ENCODE measurements at regions of chr17 and their contacts with region 1.

Region 1: GRCh38 chr17:50507871-50508572 is at the start of gene MYCBPAP:
- DNase-seq: peak; percentile 16
- H3K4me3 ChIP-seq: peak within 1 kb of the TSS; percentile 49
- H3K27ac ChIP-seq: peak within 1 kb of the TSS; percentile 11
- H3K27me3 ChIP-seq: peaks cover 6% of the 10 kb centered on the region
- CTCF ChIP-seq: 0 out of 2 replicates have a peak, but pooled peaks have one; percentile 6
- polyA plus RNA-seq, gene MYCBPAP: 0.11 and 0.17 TPM in 2 replicates

Region 2: GRCh38 chr17:48915459-48916282 is 1592.4 kb before region 1 on chr17:
- CTCF ChIA-PET with region 1: interaction called, 12 read pairs
- POLR2A ChIA-PET with region 1: no interaction called
- DNase-seq: peak; percentile 55
- H3K4me3 ChIP-seq: peak overlapping the region; percentile 29; the same call in 1 of the 2 replicates
- H3K27ac ChIP-seq: peak overlapping the region; percentile 96
- H3K27me3 ChIP-seq: no peaks in the 10 kb centered on the region
- CTCF ChIP-seq: no peak

Region 3: DNA sequence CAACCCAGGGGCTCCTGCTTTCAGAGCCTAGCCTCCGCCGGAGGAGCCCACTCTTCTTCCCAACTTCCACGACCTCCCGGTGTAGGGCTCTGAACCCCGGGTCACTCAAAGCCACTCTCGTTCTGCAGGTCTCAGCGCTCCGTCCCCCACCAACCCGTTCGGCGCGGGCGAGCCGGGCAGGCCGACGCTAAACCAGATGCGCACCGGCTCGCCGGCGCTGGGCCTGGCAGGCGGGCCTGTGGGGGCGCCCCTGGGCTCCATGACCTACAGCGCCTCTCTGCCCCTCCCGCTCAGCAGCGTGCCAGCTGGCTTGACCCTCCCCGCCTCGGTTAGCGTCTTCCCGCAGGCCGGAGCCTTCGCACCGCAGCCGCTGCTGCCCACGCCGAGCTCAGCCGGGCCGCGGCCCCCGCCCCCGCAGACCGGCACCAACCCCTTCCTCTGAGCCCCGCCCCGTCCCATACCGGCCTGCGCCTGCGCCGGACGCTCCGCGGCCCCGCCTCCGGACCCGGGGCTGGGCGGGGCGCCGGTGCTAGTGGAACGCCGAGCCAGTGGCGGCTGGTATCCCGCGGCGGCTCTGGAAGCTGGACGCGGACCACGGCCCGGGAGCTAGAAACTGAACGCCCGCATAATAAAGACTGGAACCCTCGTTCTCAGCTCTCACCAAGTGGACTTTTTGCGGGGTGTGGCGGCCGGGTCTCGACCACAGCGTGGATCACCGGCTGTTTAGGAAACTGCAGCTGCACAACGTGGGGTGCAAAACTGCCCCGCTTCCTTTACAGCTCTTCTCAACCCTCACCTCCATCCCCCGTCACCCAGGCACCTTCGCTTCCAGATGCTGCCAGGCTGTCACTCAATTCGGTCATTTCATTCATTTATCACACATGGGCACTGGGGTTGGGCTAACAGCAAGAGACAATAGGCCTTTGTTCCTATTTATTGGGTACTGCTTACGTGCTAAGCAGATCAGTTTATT is 34.0 kb after region 1 on chr17:
- CTCF ChIA-PET with region 1: no interaction called
- POLR2A ChIA-PET with region 1: no interaction called
- DNase-seq: no peak
- H3K4me3 ChIP-seq: peak overlapping the region; percentile 68
- H3K27ac ChIP-seq: no peak overlapping the region
- H3K27me3 ChIP-seq: no peaks in the 10 kb centered on the region
- CTCF ChIP-seq: peak; percentile 21; the same call in 1 of the 2 replicates

Region 4: GRCh38 chr17:50575581-50576210 is 67.7 kb after region 1 on chr17:
- CTCF ChIA-PET with region 1: no interaction called
- POLR2A ChIA-PET with region 1: no interaction called
- DNase-seq: no peak
- H3K4me3 ChIP-seq: no peak overlapping the region
- H3K27ac ChIP-seq: no peak overlapping the region
- H3K27me3 ChIP-seq: peaks cover 35% of the 10 kb centered on the region
- CTCF ChIP-seq: no peak

Region 5: DNA sequence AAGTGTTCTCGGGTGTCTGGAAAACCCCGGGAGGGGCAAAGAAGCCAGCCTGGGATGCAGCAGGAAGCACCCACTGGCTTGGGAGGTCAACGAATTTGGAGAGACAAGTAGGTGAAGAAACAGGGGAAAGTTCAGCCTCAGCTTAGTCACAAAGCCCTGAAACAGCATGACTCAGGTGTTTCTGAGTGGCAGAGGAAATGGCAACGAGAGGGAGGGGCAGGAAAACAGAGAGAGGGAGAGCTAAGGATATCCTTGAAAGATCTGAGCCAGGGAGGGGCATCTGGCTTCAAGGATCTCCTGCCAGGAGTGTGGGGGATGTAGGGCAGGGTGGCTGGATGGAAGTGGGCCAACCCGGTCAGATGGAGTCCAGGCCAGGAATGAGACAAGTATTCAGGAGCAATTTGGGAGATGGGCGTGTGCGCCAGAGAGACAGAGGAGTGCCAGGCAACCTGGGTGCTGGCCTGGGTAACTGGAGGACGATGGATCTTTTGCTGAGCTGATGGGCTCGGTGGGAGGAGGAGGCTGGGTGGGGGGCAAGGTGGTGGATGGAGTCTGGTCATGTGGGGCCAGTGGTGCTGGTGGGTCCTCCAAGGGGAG is 153.9 kb after region 1 on chr17:
- CTCF ChIA-PET with region 1: no interaction called
- POLR2A ChIA-PET with region 1: no interaction called
- DNase-seq: peak; percentile 64
- H3K4me3 ChIP-seq: no peak overlapping the region
- H3K27ac ChIP-seq: peak overlapping the region; percentile 90
- H3K27me3 ChIP-seq: no peaks in the 10 kb centered on the region
- CTCF ChIP-seq: no peak